Activated CD8-positive, alpha-beta memory T cell treated with anti-CD3 and anti-CD28 coated beads, Interleukin-2, amount 10 ng/mL, durations not matched to agents 7 days and 5 days (primary cell): ENCODE measurements at regions of chr15 and their contacts with region 1.

Region 1: DNA sequence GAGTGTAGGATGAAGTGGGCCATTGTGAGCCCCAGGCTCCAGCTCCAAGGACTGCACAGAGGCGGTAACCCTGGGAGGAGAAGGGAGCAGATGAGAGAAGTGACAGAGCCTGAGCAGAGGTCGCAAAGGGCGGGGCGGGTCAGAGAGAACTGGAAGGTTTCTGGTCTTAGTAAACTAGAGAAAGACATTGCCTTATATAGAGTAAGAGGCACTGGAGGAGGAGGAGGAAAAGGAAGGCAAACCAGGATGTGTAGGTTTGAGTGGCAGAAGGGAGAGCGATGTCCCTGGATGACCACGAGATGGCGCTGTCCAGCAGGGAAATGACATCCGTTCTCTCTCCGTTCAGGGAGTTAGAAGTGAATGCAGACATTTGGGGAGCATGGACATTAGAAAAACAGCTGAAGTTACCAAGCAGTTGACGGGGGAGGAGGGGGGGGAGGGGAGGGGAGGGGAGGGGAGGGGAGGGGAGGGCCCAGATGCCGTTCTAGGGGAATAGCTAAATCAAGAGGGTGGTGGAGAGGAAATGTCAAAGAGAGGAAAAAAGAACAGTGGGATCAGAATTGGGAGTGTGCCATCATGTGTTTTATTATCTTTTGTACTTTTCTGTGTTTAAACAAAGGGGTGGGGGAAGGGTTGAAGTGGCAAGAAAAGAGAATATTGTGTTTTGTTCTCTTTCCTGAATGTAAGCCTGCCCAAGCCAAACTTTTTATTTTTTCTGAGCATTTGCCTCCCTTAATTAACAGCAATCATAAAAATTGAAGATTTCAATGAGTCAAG is 48.8 kb downstream of the STARD5 start:
- DNase-seq: peak; percentile 88
- ATAC-seq: peak; percentile 90
- H3K4me3 Mint-ChIP-seq: no peak overlapping the region
- H3K27ac Mint-ChIP-seq: peak overlapping the region; percentile 45
- H3K4me1 Mint-ChIP-seq: peaks cover 16% of the 10 kb centered on the region
- H3K27me3 Mint-ChIP-seq: no peaks in the 10 kb centered on the region

Region 2: GRCh38 chr15:81106560-81106959 is 168.6 kb before region 1 on chr15:
- CTCF ChIA-PET with region 1: interaction called, 276 read pairs
- DNase-seq: peak; percentile 57
- ATAC-seq: peak; percentile 51
- H3K4me3 Mint-ChIP-seq: no peak overlapping the region
- H3K27ac Mint-ChIP-seq: no peak overlapping the region
- H3K4me1 Mint-ChIP-seq: peaks cover 13% of the 10 kb centered on the region
- H3K27me3 Mint-ChIP-seq: peaks cover 59% of the 10 kb centered on the region

Region 3: DNA sequence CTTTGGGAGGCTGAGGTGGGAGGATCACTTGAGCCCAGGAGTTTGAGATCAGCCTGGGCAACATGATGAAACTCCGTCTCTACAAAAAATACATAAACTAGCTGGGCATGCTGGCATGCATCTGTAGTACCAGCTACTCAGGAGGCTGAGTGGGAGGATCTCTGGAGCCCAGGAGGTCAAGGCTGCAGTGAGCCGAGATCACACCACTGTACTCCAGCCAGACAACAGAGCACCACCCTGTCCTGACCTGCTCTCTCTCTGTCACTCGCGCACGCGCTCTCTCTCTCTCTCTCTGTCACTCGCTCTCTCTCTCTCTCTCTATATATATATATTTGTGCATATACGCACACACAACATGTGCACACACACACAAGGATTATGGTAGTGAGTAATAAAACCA is 16.7 kb before region 1 on chr15:
- CTCF ChIA-PET with region 1: no interaction called
- DNase-seq: no peak
- ATAC-seq: no peak
- H3K4me3 Mint-ChIP-seq: no peak overlapping the region
- H3K27ac Mint-ChIP-seq: no peak overlapping the region
- H3K4me1 Mint-ChIP-seq: no peaks in the 10 kb centered on the region
- H3K27me3 Mint-ChIP-seq: peaks cover 30% of the 10 kb centered on the region

Region 4: DNA sequence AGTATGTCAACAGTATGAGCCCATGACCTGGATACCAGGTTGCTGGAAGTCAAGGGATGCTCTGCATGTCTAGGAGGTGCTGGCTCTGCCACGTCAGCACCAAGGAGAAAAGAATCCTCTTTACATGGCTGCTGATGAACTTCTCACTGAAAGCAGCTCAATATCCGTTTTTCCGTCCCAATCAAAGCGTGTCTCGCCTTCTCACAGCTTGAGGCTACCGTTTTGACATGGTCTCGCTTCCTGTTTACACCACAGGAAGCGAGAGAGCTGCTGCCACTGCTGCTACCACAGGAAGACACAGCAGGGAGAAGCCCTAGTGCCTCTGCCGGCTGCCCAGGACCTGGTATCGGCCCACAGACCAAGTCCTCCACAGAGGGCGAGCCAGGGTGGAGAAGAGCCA is 21.6 kb after region 1 on chr15:
- CTCF ChIA-PET with region 1: interaction called, 60 read pairs
- DNase-seq: peak; percentile 93
- ATAC-seq: peak; percentile 73
- H3K4me3 Mint-ChIP-seq: peak overlapping the region; percentile 96
- H3K27ac Mint-ChIP-seq: peak overlapping the region; percentile 95
- H3K4me1 Mint-ChIP-seq: peaks cover 84% of the 10 kb centered on the region
- H3K27me3 Mint-ChIP-seq: no peaks in the 10 kb centered on the region

Region 5: DNA sequence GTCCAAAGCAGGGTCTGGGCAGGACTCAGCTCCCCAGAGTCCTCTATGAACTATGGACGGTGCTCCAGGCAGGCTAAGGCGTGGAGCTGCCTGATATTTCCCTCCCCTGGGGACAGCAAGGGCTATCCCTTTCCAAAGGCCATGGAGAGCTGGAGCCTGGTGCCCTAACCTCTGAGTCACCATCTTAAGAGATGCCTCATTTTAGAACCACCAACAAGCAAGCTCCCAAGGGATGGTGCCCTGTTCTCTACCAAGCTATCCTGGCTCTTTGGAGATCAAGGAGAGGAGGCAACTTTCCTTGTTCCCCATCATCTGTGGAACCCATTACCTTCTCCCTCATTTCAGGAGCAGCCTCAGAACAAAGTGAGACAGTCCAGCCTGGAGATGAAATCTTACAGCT is 33.1 kb after region 1 on chr15:
- CTCF ChIA-PET with region 1: interaction called, 11 read pairs
- DNase-seq: no peak
- ATAC-seq: no peak
- H3K4me3 Mint-ChIP-seq: no peak overlapping the region
- H3K27ac Mint-ChIP-seq: no peak overlapping the region
- H3K4me1 Mint-ChIP-seq: peaks cover 31% of the 10 kb centered on the region
- H3K27me3 Mint-ChIP-seq: no peaks in the 10 kb centered on the region

Region 6: DNA sequence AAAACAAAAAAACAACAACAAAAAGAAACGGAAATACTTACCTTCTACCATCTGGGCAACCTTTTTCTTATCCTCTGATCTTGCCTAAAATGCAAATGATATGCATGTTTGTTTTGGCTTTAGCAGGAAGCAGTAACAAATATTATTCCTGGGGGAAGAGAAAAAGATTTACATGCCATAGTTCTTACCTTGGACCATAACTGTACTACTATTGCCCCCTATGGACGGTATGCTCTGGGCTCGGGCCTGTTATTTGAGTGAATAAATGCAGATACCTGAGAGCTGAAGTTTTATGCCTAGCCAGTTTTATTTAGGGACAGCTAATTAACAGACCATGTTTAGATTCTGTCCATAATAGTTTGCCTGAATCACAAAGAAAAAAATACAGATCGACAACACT is 61.4 kb after region 1 on chr15:
- CTCF ChIA-PET with region 1: interaction called, 78 read pairs
- DNase-seq: peak; percentile 55
- ATAC-seq: peak; percentile 55
- H3K4me3 Mint-ChIP-seq: no peak overlapping the region
- H3K27ac Mint-ChIP-seq: no peak overlapping the region
- H3K4me1 Mint-ChIP-seq: peaks cover 17% of the 10 kb centered on the region
- H3K27me3 Mint-ChIP-seq: no peaks in the 10 kb centered on the region

Region 7: DNA sequence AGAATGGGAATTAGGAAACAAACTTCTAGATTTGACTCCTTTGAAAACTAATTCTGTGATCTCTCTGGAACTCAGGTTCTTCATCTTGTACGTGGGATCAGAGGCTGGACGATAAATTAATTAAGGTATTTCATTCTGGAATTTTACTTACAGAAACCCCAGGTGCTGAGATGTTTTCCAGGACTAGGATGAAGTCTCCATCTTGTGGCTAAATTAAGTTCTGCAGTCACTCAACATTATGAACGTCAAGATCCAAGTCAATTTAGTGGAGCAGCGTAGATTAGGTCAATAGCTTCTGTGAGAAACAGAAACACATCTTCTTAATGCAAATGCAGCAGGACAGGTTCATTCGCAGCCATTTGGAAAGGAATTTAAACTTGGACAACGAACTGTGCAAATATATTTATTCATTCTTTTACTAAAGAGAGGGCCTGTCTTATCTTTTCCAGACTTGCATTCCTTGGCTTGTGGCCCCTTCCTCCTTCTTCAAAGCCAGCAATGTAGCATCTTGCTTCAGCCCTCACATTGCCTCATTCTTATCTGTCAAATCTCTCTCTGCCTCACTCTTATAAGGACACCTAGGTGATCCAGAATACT is 125.6 kb after region 1 on chr15:
- CTCF ChIA-PET with region 1: interaction called, 21 read pairs
- DNase-seq: no peak
- ATAC-seq: no peak
- H3K4me3 Mint-ChIP-seq: no peak overlapping the region
- H3K27ac Mint-ChIP-seq: no peak overlapping the region
- H3K4me1 Mint-ChIP-seq: peaks cover 2% of the 10 kb centered on the region
- H3K27me3 Mint-ChIP-seq: peaks cover 2% of the 10 kb centered on the region